ENCODE measurements at regions of chr15 and their contacts with region 1.

Region 1: GRCh38 chr15:92683232-92683834 is 27.8 kb upstream of the FAM174B start:
- DNase-seq: peak; percentile 53
- H3K4me3 ChIP-seq: no peak overlapping the region
- H3K27ac ChIP-seq: peak overlapping the region in 2 of 4 donors; percentile 37 to 71
- H3K4me1 ChIP-seq: peaks cover 4 to 22% (median 19%) of the 10 kb centered on the region in 4 donors
- H3K27me3 ChIP-seq: no peaks in the 10 kb centered on the region
- CTCF ChIP-seq: peak; percentile 70 to 90 (median 77)
- EP300 ChIP-seq: no peak
- POLR2A ChIP-seq: no peak

Region 2: GRCh38 chr15:92521624-92522008 is 161.7 kb before region 1 on chr15:
- intact Hi-C with region 1: loop called (anchors 1 kb)
- DNase-seq: no peak
- H3K4me3 ChIP-seq: no peak overlapping the region
- H3K27ac ChIP-seq: peak overlapping the region in 2 of 4 donors; percentile 30 to 39
- H3K4me1 ChIP-seq: peaks cover 3 to 6% (median 4%) of the 10 kb centered on the region in 4 donors
- H3K27me3 ChIP-seq: no peaks in the 10 kb centered on the region
- CTCF ChIP-seq: peak; percentile 82 to 95 (median 87)
- EP300 ChIP-seq: no peak
- POLR2A ChIP-seq: no peak

Region 3: DNA sequence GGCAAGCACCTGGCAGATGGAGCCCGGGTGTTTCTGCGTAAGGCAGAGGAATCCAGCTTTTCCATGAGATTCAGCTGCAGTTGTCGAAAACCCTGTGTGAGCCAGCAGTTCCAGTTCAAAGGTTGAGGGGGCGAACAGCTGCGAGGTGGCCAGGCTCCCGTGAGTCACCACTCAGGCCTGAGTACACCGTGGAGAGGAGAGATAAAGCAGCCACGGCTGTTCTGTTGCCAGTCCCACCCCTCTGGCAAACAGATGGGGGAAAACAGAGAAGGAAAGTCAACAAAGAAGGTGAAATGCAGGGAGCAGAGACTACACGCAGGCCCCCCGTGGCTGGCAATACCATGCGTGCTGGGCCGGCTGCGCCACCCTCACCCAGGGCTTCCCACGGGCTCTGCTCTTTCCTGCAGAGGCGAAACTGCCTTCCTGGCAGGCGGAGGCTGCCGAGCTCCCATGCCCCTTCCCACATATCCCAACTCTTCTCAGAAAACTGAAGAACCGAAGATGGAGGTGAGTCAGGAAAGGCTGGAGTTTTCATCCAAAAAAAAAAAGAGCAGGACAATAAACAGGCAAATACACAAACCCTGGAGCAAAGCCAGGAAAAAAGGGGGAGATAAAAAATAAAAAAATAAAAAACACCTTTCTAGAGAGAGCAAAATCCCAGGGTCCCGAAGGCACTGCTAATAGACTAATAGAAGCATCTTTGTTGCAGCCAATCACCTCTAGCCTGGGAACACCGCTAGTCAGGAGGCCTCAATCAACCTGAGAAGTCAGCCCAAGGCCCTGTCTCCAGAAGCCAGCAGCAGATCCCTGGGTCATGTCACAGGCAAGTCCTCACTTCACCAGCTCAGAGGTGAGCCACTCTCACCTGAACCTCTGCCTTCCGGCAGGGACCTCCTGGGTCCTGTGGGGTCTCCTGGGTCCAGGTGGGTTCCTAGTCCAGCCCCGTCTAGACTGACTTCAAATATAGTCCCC is 65.5 kb before region 1 on chr15:
- intact Hi-C with region 1: loop called (anchors 2 kb)
- DNase-seq: no peak
- H3K4me3 ChIP-seq: no peak overlapping the region
- H3K27ac ChIP-seq: peak overlapping the region; percentile 57 to 72 (median 69)
- H3K4me1 ChIP-seq: peaks cover 35 to 42% (median 41%) of the 10 kb centered on the region in 4 donors
- H3K27me3 ChIP-seq: no peaks in the 10 kb centered on the region
- CTCF ChIP-seq: no peak
- EP300 ChIP-seq: no peak
- POLR2A ChIP-seq: no peak

Region 4: DNA sequence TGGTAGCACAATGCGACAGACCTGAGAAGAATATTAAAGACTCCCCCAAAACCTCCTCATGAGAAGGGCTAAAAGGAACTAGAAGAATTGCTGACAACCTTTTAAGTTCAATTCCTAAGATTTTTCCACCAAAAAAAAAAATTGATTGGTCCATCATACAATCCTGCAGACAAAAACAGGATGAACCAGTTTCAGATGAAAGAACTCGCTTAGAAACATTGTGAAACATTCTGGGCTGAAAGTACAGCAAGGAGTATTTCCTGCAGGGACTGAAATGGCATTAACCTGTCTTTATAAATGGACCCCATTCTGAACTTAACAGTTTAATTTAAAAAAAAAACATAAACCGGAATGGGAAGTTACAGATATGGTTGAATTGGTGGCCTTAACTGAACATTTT is 68.2 kb after region 1 on chr15:
- intact Hi-C with region 1: no loop called
- DNase-seq: no peak
- H3K4me3 ChIP-seq: no peak overlapping the region
- H3K27ac ChIP-seq: no peak overlapping the region
- H3K4me1 ChIP-seq: no peaks in the 10 kb centered on the region
- H3K27me3 ChIP-seq: no peaks in the 10 kb centered on the region
- CTCF ChIP-seq: no peak
- EP300 ChIP-seq: no peak
- POLR2A ChIP-seq: no peak